CD8-positive, alpha-beta T cell (primary cell): ENCODE measurements at regions of chr18 and their contacts with region 1.

Region 1: GRCh38 chr18:8696749-8697211 is 8.6 kb upstream of the MTCL1 start:
- DNase-seq: peak; percentile 53 to 87 (median 73)
- ATAC-seq: peak; percentile 97
- H3K4me3 ChIP-seq: no peak overlapping the region
- H3K4me3 Mint-ChIP-seq: no peak overlapping the region
- H3K27ac ChIP-seq: no peak overlapping the region
- H3K27ac Mint-ChIP-seq: no peak overlapping the region
- H3K4me1 ChIP-seq: no peaks in the 10 kb centered on the region
- H3K4me1 Mint-ChIP-seq: no peaks in the 10 kb centered on the region
- H3K27me3 ChIP-seq: peaks cover 5 to 7% of the 10 kb centered on the region in 2 experiments
- H3K27me3 Mint-ChIP-seq: peaks cover 20% of the 10 kb centered on the region
- CTCF ChIP-seq: peak; percentile 95

Region 2: GRCh38 chr18:8608795-8609658 is 87.8 kb before region 1 on chr18 and contains the start of gene RAB12:
- CTCF ChIA-PET with region 1: no interaction called
- POLR2A ChIA-PET with region 1: no interaction called
- intact Hi-C with region 1: loop called in 1 of 2 experiments (anchors 2 kb)
- DNase-seq: peak; percentile 72 to 93 (median 88)
- ATAC-seq: peak; percentile 92
- H3K4me3 ChIP-seq: peak within 1 kb of the TSS; percentile 64 to 70
- H3K4me3 Mint-ChIP-seq: peak within 1 kb of the TSS; percentile 90
- H3K27ac ChIP-seq: peak within 1 kb of the TSS; percentile 53 to 70
- H3K27ac Mint-ChIP-seq: peak within 1 kb of the TSS; percentile 90
- H3K4me1 ChIP-seq: peaks cover 42% of the 10 kb centered on the region
- H3K4me1 Mint-ChIP-seq: peaks cover 50% of the 10 kb centered on the region
- H3K27me3 ChIP-seq: no peaks in the 10 kb centered on the region
- H3K27me3 Mint-ChIP-seq: no peaks in the 10 kb centered on the region
- CTCF ChIP-seq: peak; percentile 70
- total RNA-seq, gene RAB12: 20.2 to 20.9 TPM

Region 3: GRCh38 chr18:8686611-8687010 is 10.2 kb before region 1 on chr18:
- CTCF ChIA-PET with region 1: interaction called, 16 read pairs
- POLR2A ChIA-PET with region 1: no interaction called
- intact Hi-C with region 1: no loop called
- DNase-seq: no peak
- ATAC-seq: no peak
- H3K4me3 ChIP-seq: no peak overlapping the region
- H3K4me3 Mint-ChIP-seq: no peak overlapping the region
- H3K27ac ChIP-seq: no peak overlapping the region
- H3K27ac Mint-ChIP-seq: no peak overlapping the region
- H3K4me1 ChIP-seq: no peaks in the 10 kb centered on the region
- H3K4me1 Mint-ChIP-seq: no peaks in the 10 kb centered on the region
- H3K27me3 ChIP-seq: no peaks in the 10 kb centered on the region
- H3K27me3 Mint-ChIP-seq: peaks cover 2% of the 10 kb centered on the region
- CTCF ChIP-seq: no peak

Region 4: GRCh38 chr18:8858888-8859511 is 162.2 kb after region 1 on chr18:
- CTCF ChIA-PET with region 1: no interaction called
- POLR2A ChIA-PET with region 1: no interaction called
- intact Hi-C with region 1: loop called in 1 of 2 experiments (anchors 10 kb)
- DNase-seq: no peak
- ATAC-seq: no peak
- H3K4me3 ChIP-seq: no peak overlapping the region
- H3K4me3 Mint-ChIP-seq: no peak overlapping the region
- H3K27ac ChIP-seq: no peak overlapping the region
- H3K27ac Mint-ChIP-seq: no peak overlapping the region
- H3K4me1 ChIP-seq: no peaks in the 10 kb centered on the region
- H3K4me1 Mint-ChIP-seq: no peaks in the 10 kb centered on the region
- H3K27me3 ChIP-seq: no peaks in the 10 kb centered on the region
- H3K27me3 Mint-ChIP-seq: peaks cover 4% of the 10 kb centered on the region
- CTCF ChIP-seq: no peak

Region 5: DNA sequence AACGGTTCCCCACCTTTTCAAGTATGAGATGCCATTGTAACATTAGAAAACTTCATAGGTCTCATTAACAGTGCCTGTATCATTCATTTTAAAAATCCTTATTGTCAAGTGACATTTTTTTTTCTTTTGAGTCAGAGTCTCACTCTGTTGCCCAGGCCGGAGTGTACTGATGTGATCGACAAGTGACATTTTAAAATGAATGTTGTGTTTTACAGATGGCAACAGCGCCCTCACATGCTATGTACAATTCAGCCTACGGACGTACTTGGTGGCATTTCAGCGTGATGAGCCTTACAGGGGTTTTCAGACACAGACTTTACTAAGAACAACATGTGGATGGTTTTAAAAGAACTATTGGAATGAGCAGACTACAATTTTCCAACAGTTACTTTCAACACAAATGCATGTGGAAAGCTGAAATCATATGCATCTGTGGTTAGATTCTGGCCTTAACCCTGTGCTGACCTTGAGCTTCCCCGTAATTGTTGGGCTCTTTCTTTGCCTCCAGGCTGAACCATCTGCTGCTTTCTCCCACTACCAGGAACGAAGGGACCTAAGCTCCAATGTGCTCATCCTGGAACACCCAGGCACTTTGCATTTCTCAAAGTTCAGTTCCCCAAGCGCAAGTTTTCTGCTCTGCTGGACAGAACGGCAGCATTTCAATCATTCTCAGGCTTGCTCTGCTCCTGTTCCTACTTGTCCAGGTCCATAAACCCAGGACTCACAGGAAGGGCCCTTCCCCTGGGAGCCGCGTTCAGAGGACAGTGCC is 285.8 kb after region 1 on chr18:
- CTCF ChIA-PET with region 1: interaction called, 93 read pairs
- POLR2A ChIA-PET with region 1: interaction called, 4 read pairs
- intact Hi-C with region 1: no loop called
- DNase-seq: peak in 2 of 9 experiments; percentile 23 to 46
- ATAC-seq: peak; percentile 36
- H3K4me3 ChIP-seq: no peak overlapping the region
- H3K4me3 Mint-ChIP-seq: no peak overlapping the region
- H3K27ac ChIP-seq: no peak overlapping the region
- H3K27ac Mint-ChIP-seq: no peak overlapping the region
- H3K4me1 ChIP-seq: no peaks in the 10 kb centered on the region
- H3K4me1 Mint-ChIP-seq: no peaks in the 10 kb centered on the region
- H3K27me3 ChIP-seq: no peaks in the 10 kb centered on the region
- H3K27me3 Mint-ChIP-seq: peaks cover 6% of the 10 kb centered on the region
- CTCF ChIP-seq: no peak